Common myeloid progenitor, CD34-positive (primary cell): ENCODE measurements at regions of chr4 and their contacts with region 1.

Region 1: DNA sequence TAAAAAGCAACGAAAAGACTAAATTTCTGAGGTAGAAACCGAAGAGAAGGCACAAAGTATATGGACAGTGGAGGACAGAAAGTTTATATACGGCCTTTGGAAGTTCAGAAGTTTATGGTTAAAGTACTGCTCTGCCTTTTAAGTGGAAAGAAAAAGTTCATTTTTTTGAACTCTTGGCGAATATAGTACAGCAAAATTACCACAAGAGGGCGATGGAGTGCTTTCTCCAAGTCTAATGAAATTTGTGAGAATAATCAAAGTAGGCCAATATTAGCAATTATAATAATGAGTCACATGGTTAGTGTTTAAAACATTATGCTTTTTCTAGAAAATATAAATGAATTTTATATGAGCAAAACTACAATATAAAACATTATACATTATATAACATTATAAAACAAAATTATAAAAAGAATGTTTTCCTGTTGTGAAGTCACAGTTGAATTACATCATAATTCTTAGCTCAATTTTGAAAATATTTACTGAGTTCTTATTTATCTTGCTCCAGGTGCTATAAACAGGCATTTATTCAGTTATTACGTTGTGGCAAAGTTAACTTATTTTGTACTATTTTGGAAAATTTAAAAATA is 136.2 kb upstream of the BMPR1B start:
- DNase-seq: peak; percentile 52 to 69 (median 60)
- H3K4me3 ChIP-seq: no peak overlapping the region
- H3K27ac ChIP-seq: no peak overlapping the region
- H3K4me1 ChIP-seq: no peaks in the 10 kb centered on the region
- H3K27me3 ChIP-seq: no peaks in the 10 kb centered on the region

Region 2: GRCh38 chr4:94548571-94548970 is 73.0 kb before region 1 on chr4:
- CTCF ChIA-PET with region 1: no interaction called
- POLR2A ChIA-PET with region 1: no interaction called
- DNase-seq: peak; percentile 16 to 73 (median 65)
- H3K4me3 ChIP-seq: no peak overlapping the region
- H3K27ac ChIP-seq: peak overlapping the region in 1 of 2 experiments; percentile 1
- H3K4me1 ChIP-seq: peaks cover 0 to 3% (median 0%) of the 10 kb centered on the region in 4 experiments
- H3K27me3 ChIP-seq: no peaks in the 10 kb centered on the region

Region 3: DNA sequence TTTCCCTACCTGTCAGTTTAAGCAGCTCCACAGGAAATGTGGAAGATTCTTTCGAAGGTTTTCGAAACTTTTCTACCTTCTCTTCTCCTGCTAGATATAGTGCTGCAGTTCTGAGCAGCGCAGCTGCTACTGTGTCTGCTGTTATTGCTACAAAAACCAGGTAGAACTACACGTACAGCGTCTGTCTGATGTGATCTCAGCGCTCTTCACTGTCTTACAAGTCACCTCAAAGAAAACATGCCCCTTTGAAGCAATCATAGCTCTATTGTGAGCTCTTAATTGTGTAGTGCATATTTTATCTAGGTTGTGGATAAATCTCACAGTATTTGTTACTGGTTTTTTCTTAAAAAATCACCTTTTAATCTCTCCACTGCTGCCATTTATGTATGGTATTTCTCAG is 11.4 kb before region 1 on chr4:
- CTCF ChIA-PET with region 1: interaction called, 21 read pairs
- POLR2A ChIA-PET with region 1: no interaction called
- DNase-seq: no peak
- H3K4me3 ChIP-seq: no peak overlapping the region
- H3K27ac ChIP-seq: no peak overlapping the region
- H3K4me1 ChIP-seq: no peaks in the 10 kb centered on the region
- H3K27me3 ChIP-seq: no peaks in the 10 kb centered on the region

Region 4: DNA sequence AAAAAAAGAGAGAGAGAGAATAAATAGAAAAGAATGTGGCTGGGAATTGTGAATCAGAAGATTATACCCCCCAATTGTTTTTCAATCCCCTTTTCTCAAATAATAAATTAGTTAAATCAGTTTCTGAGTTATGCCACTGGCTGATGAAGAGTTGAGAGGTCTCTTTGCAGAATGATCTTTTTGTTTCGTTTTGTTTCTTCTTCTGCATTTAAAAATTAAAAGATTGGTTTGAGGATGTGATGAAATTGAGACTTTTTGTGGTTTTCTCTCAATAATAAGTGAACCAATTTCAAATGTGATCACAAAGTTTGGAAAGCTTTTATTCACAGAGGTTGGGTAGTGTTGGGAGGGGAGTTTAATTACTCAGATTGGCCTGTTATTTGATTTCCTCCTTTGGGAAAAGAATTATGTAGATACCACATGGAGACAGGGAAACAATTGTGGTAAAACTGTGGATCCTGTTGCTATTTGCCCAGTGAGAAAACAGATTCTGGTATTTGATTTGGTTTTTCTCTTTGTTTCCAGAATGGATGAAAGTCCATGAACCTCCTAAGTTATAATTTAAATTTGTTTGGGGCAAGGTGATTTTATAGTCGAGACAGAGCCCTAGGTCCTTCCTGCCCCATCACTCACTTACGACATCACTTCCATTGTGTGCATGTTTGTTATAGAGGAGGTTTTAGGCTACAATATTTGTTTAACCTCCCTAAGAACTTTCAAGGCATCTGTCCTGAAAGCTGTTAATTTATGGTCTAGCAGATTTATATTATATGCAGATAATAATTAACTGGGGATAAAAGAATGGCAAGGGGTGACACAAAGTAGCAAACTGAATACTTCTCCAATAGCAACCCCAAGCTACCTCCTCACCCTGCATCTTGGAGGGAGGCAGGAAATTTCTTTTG is 44.2 kb after region 1 on chr4:
- CTCF ChIA-PET with region 1: no interaction called
- POLR2A ChIA-PET with region 1: no interaction called
- DNase-seq: no peak
- H3K4me3 ChIP-seq: no peak overlapping the region
- H3K27ac ChIP-seq: no peak overlapping the region
- H3K4me1 ChIP-seq: no peaks in the 10 kb centered on the region
- H3K27me3 ChIP-seq: no peaks in the 10 kb centered on the region

Region 5: DNA sequence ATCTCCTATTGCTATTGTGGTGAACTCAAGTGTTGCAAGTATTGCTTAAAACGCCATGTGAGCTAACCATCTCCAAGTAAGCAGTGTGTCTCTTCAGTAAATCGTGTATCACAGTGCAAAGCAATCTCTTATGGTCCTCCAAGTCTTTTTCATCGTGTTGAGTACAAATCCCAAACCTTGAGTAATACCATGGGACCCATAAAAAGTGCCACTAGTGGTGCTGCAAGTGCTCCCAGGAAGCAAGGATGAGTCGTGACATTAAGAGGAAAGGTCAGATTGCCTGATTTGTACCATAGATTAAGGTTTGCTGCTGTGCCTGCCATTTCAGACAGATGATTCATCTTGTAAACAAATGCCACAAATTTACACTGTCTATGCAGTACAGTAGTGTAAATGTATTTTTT is 69.3 kb after region 1 on chr4:
- CTCF ChIA-PET with region 1: no interaction called
- POLR2A ChIA-PET with region 1: no interaction called
- DNase-seq: no peak
- H3K4me3 ChIP-seq: no peak overlapping the region
- H3K27ac ChIP-seq: no peak overlapping the region
- H3K4me1 ChIP-seq: no peaks in the 10 kb centered on the region
- H3K27me3 ChIP-seq: no peaks in the 10 kb centered on the region

Region 6: DNA sequence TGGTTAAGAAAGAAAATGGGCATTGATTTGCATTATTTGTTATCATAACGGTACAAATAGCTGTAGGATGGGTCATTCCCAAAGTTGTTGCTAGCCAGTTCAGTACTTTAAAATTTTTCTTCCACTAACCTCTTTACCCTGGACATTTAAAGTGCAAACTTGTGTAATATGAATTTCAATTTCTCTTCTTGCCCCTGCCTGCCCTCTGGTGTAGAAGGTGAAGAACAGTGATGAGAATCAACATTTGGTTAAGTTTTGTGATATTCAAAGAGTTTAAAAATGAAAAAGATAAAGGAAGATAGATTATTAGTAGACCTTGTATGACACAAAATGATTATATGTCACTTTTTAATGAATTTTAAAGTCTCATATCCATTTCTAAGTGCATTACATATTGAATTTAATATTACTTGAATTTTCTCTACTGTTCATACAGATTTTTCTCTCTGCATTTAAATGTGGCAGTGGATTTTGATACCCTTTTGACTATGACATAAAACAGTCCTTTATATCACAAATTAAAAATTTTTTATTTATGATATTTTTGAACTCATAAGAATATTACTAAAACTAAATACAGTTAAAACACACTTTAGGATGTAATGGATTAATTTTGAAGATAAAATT is 473.9 kb after region 1 on chr4:
- CTCF ChIA-PET with region 1: interaction called, 60 read pairs
- POLR2A ChIA-PET with region 1: no interaction called
- DNase-seq: peak; percentile 38 to 58 (median 58)
- H3K4me3 ChIP-seq: no peak overlapping the region
- H3K27ac ChIP-seq: no peak overlapping the region
- H3K4me1 ChIP-seq: peaks cover 0 to 14% (median 2%) of the 10 kb centered on the region in 4 experiments
- H3K27me3 ChIP-seq: no peaks in the 10 kb centered on the region

Region 7: GRCh38 chr4:95124906-95125504 is 503.4 kb after region 1 on chr4:
- CTCF ChIA-PET with region 1: interaction called, 20 read pairs
- POLR2A ChIA-PET with region 1: no interaction called
- DNase-seq: peak; percentile 24 to 34 (median 25)
- H3K4me3 ChIP-seq: no peak overlapping the region
- H3K27ac ChIP-seq: no peak overlapping the region
- H3K4me1 ChIP-seq: peaks cover 0 to 4% (median 3%) of the 10 kb centered on the region in 4 experiments
- H3K27me3 ChIP-seq: no peaks in the 10 kb centered on the region